Heart left ventricle (tissue), 16 donors: ENCODE measurements at regions of chr9 and their contacts with region 1.

Region 1: GRCh38 chr9:97437051-97437600 is 25.2 kb downstream of the TDRD7 start:
- DNase-seq: no peak
- ATAC-seq: no peak
- H3K4me3 ChIP-seq: no peak overlapping the region
- H3K27ac ChIP-seq: no peak overlapping the region
- H3K4me1 ChIP-seq: no peaks in the 10 kb centered on the region
- H3K27me3 ChIP-seq: no peaks in the 10 kb centered on the region
- CTCF ChIP-seq: no peak
- POLR2A ChIP-seq: no peak

Region 2: GRCh38 chr9:98064623-98065392 is 627.7 kb after region 1 on chr9:
- intact Hi-C with region 1: loop called in 1 of 10 experiments (anchors 10 kb)
- DNase-seq: no peak
- ATAC-seq: peak in 1 of 4 donors; percentile 24
- H3K4me3 ChIP-seq: no peak overlapping the region
- H3K27ac ChIP-seq: no peak overlapping the region
- H3K4me1 ChIP-seq: peaks cover 0 to 5% (median 0%) of the 10 kb centered on the region in 12 donors
- H3K27me3 ChIP-seq: no peaks in the 10 kb centered on the region
- CTCF ChIP-seq: no peak
- POLR2A ChIP-seq: no peak